ENCODE measurements at regions of chr2 and their contacts with region 1.

Region 1: DNA sequence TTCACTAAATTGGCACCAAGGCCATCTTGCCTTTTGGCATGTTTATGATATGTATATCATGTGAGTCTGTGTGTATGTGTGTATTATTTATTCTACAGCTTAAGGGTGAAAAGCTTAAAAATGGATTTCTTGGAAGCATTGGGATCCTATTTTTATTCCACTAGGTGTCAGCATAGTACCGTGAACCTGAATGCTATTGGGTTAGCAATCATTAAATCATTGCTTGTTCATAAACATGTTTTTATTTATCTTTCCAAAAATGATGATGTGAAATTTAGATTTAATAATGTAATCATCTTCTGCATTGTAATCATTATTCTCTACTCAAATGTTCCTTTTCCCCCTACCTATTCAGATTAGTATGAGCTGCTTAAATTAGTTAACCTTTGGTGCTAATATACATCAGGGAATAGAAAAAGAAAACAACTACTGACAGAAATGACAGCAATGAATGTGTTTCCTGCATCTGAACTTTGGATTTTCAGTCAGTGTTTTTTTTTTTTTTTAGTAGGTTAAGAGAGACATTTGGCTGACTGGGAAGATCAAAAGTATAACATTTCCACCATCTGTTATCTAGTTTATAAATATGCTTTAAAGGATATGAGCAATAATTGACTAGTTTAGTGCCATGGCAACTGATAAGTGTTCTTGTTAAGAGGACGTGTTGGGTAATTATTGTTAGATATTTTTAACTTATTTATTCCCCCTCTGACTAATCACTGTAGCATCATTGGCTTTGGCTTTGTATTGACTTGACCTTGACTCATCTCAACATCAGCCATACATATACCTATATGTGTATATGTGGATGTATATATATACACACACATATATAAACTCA is 14.1 kb upstream of the ZSWIM2 start:
- DNase-seq: no peak
- H3K4me3 Mint-ChIP-seq: no peak overlapping the region
- H3K27ac Mint-ChIP-seq: no peak overlapping the region
- H3K4me1 Mint-ChIP-seq: no peaks in the 10 kb centered on the region
- H3K27me3 Mint-ChIP-seq: no peaks in the 10 kb centered on the region
- CTCF ChIP-seq: peak; percentile 71

Region 2: GRCh38 chr2:187299122-187299906 is 436.2 kb after region 1 on chr2:
- CTCF ChIA-PET with region 1: no interaction called
- intact Hi-C with region 1: loop called (anchors 2 kb)
- DNase-seq: peak; percentile 3
- H3K4me3 Mint-ChIP-seq: no peak overlapping the region
- H3K27ac Mint-ChIP-seq: no peak overlapping the region
- H3K4me1 Mint-ChIP-seq: no peaks in the 10 kb centered on the region
- H3K27me3 Mint-ChIP-seq: no peaks in the 10 kb centered on the region
- CTCF ChIP-seq: peak; percentile 23

Region 3: DNA sequence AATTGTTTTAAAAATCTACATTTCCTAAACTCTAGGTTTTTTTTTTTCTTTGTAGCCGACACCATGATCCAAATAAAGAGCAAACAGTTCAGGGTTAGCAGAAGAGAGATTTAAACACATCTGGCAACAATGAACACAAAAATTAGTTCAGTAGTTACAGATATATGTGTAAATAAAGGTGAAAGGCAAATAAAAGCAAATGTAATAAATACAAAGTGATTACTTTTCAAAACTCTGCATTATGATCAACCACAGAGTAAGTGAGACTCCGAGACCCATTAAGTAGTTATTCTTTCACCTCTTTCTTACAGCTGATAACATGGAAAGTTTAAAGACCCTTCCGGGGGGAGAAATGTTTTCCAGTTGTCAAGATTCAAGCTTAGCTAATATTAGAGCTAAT is 584.2 kb after region 1 on chr2:
- CTCF ChIA-PET with region 1: interaction called, 18 read pairs
- intact Hi-C with region 1: no loop called
- DNase-seq: no peak
- H3K4me3 Mint-ChIP-seq: no peak overlapping the region
- H3K27ac Mint-ChIP-seq: no peak overlapping the region
- H3K4me1 Mint-ChIP-seq: peaks cover 10% of the 10 kb centered on the region
- H3K27me3 Mint-ChIP-seq: no peaks in the 10 kb centered on the region
- CTCF ChIP-seq: no peak

Region 4: GRCh38 chr2:187581125-187581896 is 718.2 kb after region 1 on chr2:
- CTCF ChIA-PET with region 1: no interaction called
- intact Hi-C with region 1: loop called (anchors 2 kb)
- DNase-seq: peak; percentile 58
- H3K4me3 Mint-ChIP-seq: peak overlapping the region; percentile 39
- H3K27ac Mint-ChIP-seq: peak overlapping the region; percentile 79
- H3K4me1 Mint-ChIP-seq: peaks cover 32% of the 10 kb centered on the region
- H3K27me3 Mint-ChIP-seq: no peaks in the 10 kb centered on the region
- CTCF ChIP-seq: peak; percentile 59

Measured in Calu3 (cell line).